Activated B cell treated with CpG ODN at 0.5 μM for 24 hours (primary cell): ENCODE measurements at regions of chr18 and their contacts with region 1.

Region 1: DNA sequence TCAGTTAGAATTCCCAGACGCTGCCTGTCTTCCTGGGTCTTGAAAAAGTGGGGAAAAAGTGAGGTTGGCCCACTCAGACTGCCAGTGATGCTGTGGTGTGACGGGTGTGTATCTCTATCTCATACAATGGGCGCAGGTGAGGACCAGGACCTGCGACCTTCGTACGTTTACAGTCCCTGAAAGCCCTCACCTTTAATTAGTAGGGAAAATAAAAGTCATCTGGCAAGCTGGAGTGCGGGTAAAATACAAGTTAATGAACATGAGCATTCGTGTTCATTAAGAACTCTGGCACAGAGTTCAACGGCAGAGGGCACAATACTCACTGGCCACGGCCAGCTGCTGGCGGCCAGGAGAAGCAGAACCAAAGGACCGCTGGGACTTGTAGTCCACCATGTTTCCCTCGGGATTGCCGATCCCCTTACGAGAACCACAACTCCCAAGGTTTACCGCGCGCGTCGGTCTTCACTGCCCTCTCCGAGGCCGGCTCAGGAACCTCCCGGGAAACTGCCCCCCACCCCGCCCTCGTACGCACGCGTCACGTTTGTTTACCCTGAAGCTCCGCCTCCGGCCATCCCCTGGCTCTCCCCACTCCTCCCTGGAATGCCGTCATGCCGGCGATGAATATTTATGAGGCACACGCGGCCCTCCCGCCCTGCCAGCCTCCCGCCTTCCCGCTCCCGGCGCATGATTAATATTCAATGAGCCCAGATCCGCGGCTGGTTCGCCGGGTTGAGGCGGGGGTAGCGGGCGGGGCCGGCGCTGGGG is 488 bp upstream of the PHLPP1 start:
- DNase-seq: peak; percentile 88
- ATAC-seq: peak; percentile 79
- H3K4me3 Mint-ChIP-seq: peak overlapping the region; percentile 91
- H3K27ac Mint-ChIP-seq: peak overlapping the region; percentile 89
- H3K4me1 Mint-ChIP-seq: peaks cover 37% of the 10 kb centered on the region
- H3K27me3 Mint-ChIP-seq: no peaks in the 10 kb centered on the region
- CTCF ChIP-seq: no peak

Region 2: DNA sequence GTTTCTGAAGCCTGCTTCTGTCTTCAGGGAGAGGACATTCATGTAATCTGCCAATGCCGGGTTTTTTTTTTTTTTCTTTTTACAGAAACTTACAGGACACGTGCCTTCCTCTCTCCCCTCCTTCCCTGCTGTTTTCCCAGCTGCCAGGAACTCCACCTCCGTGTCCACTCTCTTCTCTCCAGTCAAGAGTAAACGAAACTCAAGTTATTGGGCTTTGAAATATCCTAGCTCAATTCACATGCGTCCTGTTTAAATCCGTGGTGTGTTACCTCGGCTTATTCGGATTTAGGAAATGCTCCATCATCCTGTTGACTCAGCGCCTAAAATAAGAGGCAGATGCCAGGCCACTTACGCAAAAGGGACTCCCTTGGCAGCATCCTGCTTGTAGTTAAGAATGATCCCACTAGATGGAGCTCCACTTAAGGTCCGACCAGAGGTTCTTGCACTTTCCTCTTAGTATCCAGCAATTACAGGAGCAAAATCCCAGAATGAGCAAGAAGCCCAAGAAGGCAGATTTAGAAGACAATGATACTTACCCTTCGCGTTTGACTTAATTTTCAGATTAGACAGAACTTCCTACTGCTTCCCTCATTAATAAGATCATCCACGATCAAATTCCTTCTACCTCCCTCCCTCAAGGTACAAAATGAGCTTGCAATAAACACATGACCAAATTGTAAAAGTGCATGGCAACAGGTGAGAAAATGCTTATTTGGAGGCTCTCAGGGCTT is 289.2 kb before region 1 on chr18:
- CTCF ChIA-PET with region 1: no interaction called
- POLR2A ChIA-PET with region 1: no interaction called
- intact Hi-C with region 1: loop called (anchors 5 kb)
- DNase-seq: no peak
- ATAC-seq: no peak
- H3K4me3 Mint-ChIP-seq: no peak overlapping the region
- H3K27ac Mint-ChIP-seq: no peak overlapping the region
- H3K4me1 Mint-ChIP-seq: peaks cover 10% of the 10 kb centered on the region
- H3K27me3 Mint-ChIP-seq: peaks cover 3% of the 10 kb centered on the region
- CTCF ChIP-seq: peak; percentile 50

Region 3: DNA sequence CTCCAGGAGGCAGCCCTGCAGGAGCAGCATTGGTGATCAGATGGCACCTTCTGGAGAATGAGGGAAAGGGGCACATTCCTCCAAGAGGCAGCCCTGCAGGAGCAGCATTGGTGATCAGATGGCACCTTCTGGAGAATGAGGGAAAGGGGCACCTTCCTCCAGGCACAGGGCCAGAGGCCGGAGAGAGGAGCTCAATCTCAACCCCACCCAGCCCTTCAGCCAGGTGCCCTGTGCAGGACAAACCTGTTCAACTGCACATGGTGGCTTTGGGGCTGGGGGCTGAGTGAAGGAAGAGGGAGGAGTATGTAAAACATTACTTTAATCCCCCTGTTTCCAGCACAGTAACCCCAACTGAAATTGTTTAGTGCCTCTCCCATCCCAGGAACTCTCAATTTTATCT is 22.5 kb before region 1 on chr18:
- CTCF ChIA-PET with region 1: no interaction called
- POLR2A ChIA-PET with region 1: interaction called, 11 read pairs
- intact Hi-C with region 1: no loop called
- DNase-seq: no peak
- ATAC-seq: no peak
- H3K4me3 Mint-ChIP-seq: no peak overlapping the region
- H3K27ac Mint-ChIP-seq: no peak overlapping the region
- H3K4me1 Mint-ChIP-seq: no peaks in the 10 kb centered on the region
- H3K27me3 Mint-ChIP-seq: no peaks in the 10 kb centered on the region
- CTCF ChIP-seq: no peak

Region 4: DNA sequence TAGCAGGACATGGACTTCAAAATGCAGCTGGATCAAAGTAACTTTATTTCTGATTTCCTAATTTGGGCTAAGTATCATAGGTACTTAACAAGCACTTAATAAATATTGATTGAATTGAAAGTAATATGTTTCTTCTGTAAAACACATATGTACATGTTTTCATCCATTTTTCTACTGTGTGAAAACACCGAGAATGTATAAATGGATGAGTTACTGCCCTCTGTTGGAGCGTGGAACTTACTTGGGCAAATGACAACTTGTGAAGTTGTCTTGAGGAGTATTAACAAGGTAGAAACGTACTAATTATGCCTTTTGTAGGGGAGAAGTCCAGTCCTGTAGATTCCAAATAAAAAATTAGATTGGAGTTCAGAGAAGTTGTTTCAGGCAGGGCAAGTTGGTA is 87.7 kb after region 1 on chr18:
- CTCF ChIA-PET with region 1: interaction called, 3 read pairs
- POLR2A ChIA-PET with region 1: no interaction called
- intact Hi-C with region 1: loop called (anchors 1 kb)
- DNase-seq: no peak
- ATAC-seq: no peak
- H3K4me3 Mint-ChIP-seq: no peak overlapping the region
- H3K27ac Mint-ChIP-seq: no peak overlapping the region
- H3K4me1 Mint-ChIP-seq: no peaks in the 10 kb centered on the region
- H3K27me3 Mint-ChIP-seq: no peaks in the 10 kb centered on the region
- CTCF ChIP-seq: no peak

Region 5: DNA sequence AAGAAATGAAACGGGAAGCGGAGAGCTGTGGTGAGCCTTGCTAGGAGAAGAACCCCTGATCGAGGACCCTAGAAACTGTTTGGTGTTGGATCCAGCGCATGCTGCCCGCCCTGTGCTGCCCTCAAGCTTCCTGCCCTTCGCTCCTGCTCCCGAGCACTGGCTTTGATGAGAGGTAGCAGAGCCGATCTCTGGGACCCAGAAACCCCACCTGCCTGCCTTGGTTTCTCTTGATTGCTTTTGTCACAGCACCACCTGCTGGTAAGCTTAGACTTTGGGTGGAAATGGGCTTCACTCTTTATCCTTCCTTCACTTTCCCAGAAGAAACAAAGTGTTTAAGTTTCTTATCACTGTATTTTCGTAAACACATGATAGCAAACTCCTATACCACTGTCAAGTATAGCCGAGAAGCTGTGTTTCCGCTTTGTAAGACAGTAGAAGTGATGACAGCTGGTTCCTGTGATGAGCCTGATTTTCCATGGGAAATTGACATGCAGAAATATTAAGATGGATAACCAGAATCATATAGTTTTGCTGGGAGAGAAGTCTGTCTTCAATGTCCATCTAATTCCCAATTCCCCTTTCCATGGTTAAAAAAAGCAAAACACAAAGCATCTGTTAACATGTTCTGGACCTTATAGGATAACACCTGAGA is 267.9 kb after region 1 on chr18:
- CTCF ChIA-PET with region 1: interaction called, 56 read pairs
- POLR2A ChIA-PET with region 1: interaction called, 7 read pairs
- intact Hi-C with region 1: loop called (anchors 1 kb)
- DNase-seq: peak; percentile 29
- ATAC-seq: peak; percentile 58
- H3K4me3 Mint-ChIP-seq: no peak overlapping the region
- H3K27ac Mint-ChIP-seq: no peak overlapping the region
- H3K4me1 Mint-ChIP-seq: peaks cover 6% of the 10 kb centered on the region
- H3K27me3 Mint-ChIP-seq: no peaks in the 10 kb centered on the region
- CTCF ChIP-seq: peak; percentile 60

Region 6: GRCh38 chr18:63320046-63320689 is 605.3 kb after region 1 on chr18:
- CTCF ChIA-PET with region 1: no interaction called
- POLR2A ChIA-PET with region 1: no interaction called
- intact Hi-C with region 1: loop called (anchors 5 kb)
- DNase-seq: peak; percentile 78
- ATAC-seq: peak; percentile 77
- H3K4me3 Mint-ChIP-seq: peak overlapping the region; percentile 87
- H3K27ac Mint-ChIP-seq: peak overlapping the region; percentile 85
- H3K4me1 Mint-ChIP-seq: peaks cover 49% of the 10 kb centered on the region
- H3K27me3 Mint-ChIP-seq: no peaks in the 10 kb centered on the region
- CTCF ChIP-seq: no peak

Region 7: GRCh38 chr18:63439334-63439733 is 724.5 kb after region 1 on chr18:
- CTCF ChIA-PET with region 1: interaction called, 10 read pairs
- POLR2A ChIA-PET with region 1: interaction called, 3 read pairs
- intact Hi-C with region 1: loop called (anchors 1 kb)
- DNase-seq: peak; percentile 16
- ATAC-seq: peak; percentile 79
- H3K4me3 Mint-ChIP-seq: no peak overlapping the region
- H3K27ac Mint-ChIP-seq: no peak overlapping the region
- H3K4me1 Mint-ChIP-seq: peaks cover 7% of the 10 kb centered on the region
- H3K27me3 Mint-ChIP-seq: peaks cover 7% of the 10 kb centered on the region
- CTCF ChIP-seq: peak; percentile 94